Natural killer cell (primary cell): ENCODE measurements at regions of chrX and their contacts with region 1.

Region 1: DNA sequence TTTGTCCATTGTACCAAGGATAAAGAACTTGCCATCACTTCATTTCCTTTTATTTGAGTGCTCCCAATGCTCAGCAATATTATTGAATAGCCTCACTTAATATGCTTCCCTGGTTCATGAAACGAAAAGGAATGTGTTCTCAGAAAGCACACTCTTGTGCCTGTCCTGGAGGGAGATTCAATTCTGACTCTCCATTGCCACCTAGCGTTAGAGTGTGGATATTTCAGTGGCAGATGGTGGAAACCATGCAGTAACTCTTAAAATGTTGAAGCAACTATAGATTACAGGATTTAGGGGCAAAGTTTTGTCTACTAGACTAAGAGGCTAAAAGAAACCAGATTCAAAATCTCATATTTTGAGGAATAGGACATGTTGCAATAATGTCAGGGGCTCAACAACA is 36.0 kb downstream of the GAB3 start:
- DNase-seq: peak in 1 of 2 donors; percentile 79
- ATAC-seq: peak; percentile 40 to 63 (median 49)
- H3K4me3 ChIP-seq: no peak overlapping the region
- H3K4me3 Mint-ChIP-seq: peak overlapping the region; percentile 17
- H3K27ac ChIP-seq: no peak overlapping the region
- H3K27ac Mint-ChIP-seq: peak overlapping the region; percentile 61 to 77
- H3K4me1 ChIP-seq: peaks cover 62% of the 10 kb centered on the region
- H3K4me1 Mint-ChIP-seq: peaks cover 63 to 68% of the 10 kb centered on the region in 2 donors
- H3K27me3 ChIP-seq: no peaks in the 10 kb centered on the region
- H3K27me3 Mint-ChIP-seq: no peaks in the 10 kb centered on the region
- CTCF ChIP-seq: peak; percentile 64

Region 2: GRCh38 chrX:154378782-154379591 is 335.9 kb before region 1 on chrX and contains the start of gene EMD:
- intact Hi-C with region 1: no loop called
- DNase-seq: peak; percentile 93 to 97
- ATAC-seq: peak; percentile 76 to 91 (median 79)
- H3K4me3 ChIP-seq: peak within 1 kb of the TSS; percentile 67
- H3K4me3 Mint-ChIP-seq: peak within 1 kb of the TSS; percentile 88
- H3K27ac ChIP-seq: peak within 1 kb of the TSS; percentile 97
- H3K27ac Mint-ChIP-seq: peak within 1 kb of the TSS; percentile 80 to 91
- H3K4me1 ChIP-seq: peaks cover 38% of the 10 kb centered on the region
- H3K4me1 Mint-ChIP-seq: peaks cover 11 to 12% of the 10 kb centered on the region in 2 donors
- H3K27me3 ChIP-seq: no peaks in the 10 kb centered on the region
- H3K27me3 Mint-ChIP-seq: no peaks in the 10 kb centered on the region
- CTCF ChIP-seq: no peak
- total RNA-seq, gene EMD: 141 to 175 (median 152) TPM

Region 3: GRCh38 chrX:154732421-154733065 is 17.6 kb after region 1 on chrX:
- intact Hi-C with region 1: loop called (anchors 2 kb)
- DNase-seq: peak in 1 of 2 donors; percentile 35
- ATAC-seq: peak in 1 of 3 donors; percentile 9
- H3K4me3 ChIP-seq: no peak overlapping the region
- H3K4me3 Mint-ChIP-seq: peak overlapping the region; percentile 76
- H3K27ac ChIP-seq: peak overlapping the region; percentile 92
- H3K27ac Mint-ChIP-seq: peak overlapping the region; percentile 86 to 87
- H3K4me1 ChIP-seq: peaks cover 80% of the 10 kb centered on the region
- H3K4me1 Mint-ChIP-seq: peaks cover 91 to 92% of the 10 kb centered on the region in 2 donors
- H3K27me3 ChIP-seq: no peaks in the 10 kb centered on the region
- H3K27me3 Mint-ChIP-seq: no peaks in the 10 kb centered on the region
- CTCF ChIP-seq: no peak

Region 4: GRCh38 chrX:154840856-154841255 is 125.9 kb after region 1 on chrX:
- intact Hi-C with region 1: loop called (anchors 10 kb)
- DNase-seq: peak in 1 of 2 donors; percentile 67
- ATAC-seq: peak; percentile 72 to 80 (median 77)
- H3K4me3 ChIP-seq: no peak overlapping the region
- H3K4me3 Mint-ChIP-seq: no peak overlapping the region
- H3K27ac ChIP-seq: no peak overlapping the region
- H3K27ac Mint-ChIP-seq: no peak overlapping the region
- H3K4me1 ChIP-seq: no peaks in the 10 kb centered on the region
- H3K4me1 Mint-ChIP-seq: no peaks in the 10 kb centered on the region
- H3K27me3 ChIP-seq: no peaks in the 10 kb centered on the region
- H3K27me3 Mint-ChIP-seq: peaks cover 0 to 6% of the 10 kb centered on the region in 2 donors
- CTCF ChIP-seq: peak; percentile 67

Region 5: GRCh38 chrX:155056877-155057792 is 342.2 kb after region 1 on chrX:
- intact Hi-C with region 1: no loop called
- DNase-seq: peak; percentile 44 to 79
- ATAC-seq: peak; percentile 81 to 95 (median 90)
- H3K4me3 ChIP-seq: peak overlapping the region; percentile 18
- H3K4me3 Mint-ChIP-seq: peak overlapping the region; percentile 64
- H3K27ac ChIP-seq: peak overlapping the region; percentile 26
- H3K27ac Mint-ChIP-seq: peak overlapping the region in 1 of 2 donors; percentile 58
- H3K4me1 ChIP-seq: peaks cover 15% of the 10 kb centered on the region
- H3K4me1 Mint-ChIP-seq: peaks cover 7 to 20% of the 10 kb centered on the region in 2 donors
- H3K27me3 ChIP-seq: no peaks in the 10 kb centered on the region
- H3K27me3 Mint-ChIP-seq: no peaks in the 10 kb centered on the region
- CTCF ChIP-seq: peak; percentile 66